ENCODE measurements at regions of chr11 and their contacts with region 1.

Region 1: DNA sequence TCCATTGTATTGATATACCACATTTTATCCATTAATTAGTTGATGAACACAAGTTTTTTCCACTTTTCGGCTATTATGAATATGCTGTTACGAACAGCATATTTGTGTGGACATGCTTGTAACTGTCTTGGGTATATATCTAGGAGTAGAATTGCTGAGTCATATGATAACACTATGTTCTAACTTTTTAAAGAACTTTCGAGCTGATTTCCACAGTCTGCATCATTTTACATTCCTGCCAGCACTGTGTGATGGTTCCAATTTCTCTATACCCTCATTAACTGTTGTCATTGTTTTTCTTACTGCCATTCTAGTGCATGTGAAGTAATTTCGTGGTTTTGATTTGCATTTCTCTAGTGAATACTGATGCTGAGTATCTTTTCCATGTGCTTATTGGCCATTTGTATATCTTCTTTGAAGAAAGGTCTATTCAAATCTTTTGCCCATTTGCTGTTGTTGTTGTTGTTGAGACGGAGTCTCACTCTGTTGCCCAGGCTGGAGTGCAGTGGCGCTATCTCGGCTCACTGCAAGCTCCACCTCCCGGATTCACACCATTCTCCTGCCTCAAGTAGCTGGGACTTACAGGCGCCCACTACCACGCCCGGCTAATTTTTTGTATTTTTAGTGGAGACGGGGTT is 7.4 kb upstream of the RCE1 start:
- DNase-seq: no peak
- ATAC-seq: no peak
- H3K4me3 ChIP-seq: no peak overlapping the region
- H3K27ac ChIP-seq: no peak overlapping the region
- H3K4me1 ChIP-seq: peaks cover 8% of the 10 kb centered on the region; the same call in 1 of the 2 replicates
- H3K27me3 ChIP-seq: no peaks in the 10 kb centered on the region; a peak in 1 of 5 replicates
- CTCF ChIP-seq: no peak
- EP300 ChIP-seq: no peak
- POLR2A ChIP-seq: no peak
- RAD21 ChIP-seq: no peak

Region 2: GRCh38 chr11:66694732-66695207 is 141.1 kb before region 1 on chr11:
- CTCF ChIA-PET with region 1: interaction called, 84 read pairs
- POLR2A ChIA-PET with region 1: no interaction called
- in situ Hi-C with region 1: loop called (anchors 5 kb)
- intact Hi-C with region 1: loop called (anchors 1 kb)
- DNase-seq: peak; percentile 96
- ATAC-seq: peak; percentile 97
- H3K4me3 ChIP-seq: no peak overlapping the region
- H3K27ac ChIP-seq: no peak overlapping the region
- H3K4me1 ChIP-seq: no peaks in the 10 kb centered on the region
- H3K27me3 ChIP-seq: no peaks in the 10 kb centered on the region
- CTCF ChIP-seq: peak; percentile 97
- EP300 ChIP-seq: no peak
- POLR2A ChIP-seq: no peak
- RAD21 ChIP-seq: peak; percentile 97

Region 3: DNA sequence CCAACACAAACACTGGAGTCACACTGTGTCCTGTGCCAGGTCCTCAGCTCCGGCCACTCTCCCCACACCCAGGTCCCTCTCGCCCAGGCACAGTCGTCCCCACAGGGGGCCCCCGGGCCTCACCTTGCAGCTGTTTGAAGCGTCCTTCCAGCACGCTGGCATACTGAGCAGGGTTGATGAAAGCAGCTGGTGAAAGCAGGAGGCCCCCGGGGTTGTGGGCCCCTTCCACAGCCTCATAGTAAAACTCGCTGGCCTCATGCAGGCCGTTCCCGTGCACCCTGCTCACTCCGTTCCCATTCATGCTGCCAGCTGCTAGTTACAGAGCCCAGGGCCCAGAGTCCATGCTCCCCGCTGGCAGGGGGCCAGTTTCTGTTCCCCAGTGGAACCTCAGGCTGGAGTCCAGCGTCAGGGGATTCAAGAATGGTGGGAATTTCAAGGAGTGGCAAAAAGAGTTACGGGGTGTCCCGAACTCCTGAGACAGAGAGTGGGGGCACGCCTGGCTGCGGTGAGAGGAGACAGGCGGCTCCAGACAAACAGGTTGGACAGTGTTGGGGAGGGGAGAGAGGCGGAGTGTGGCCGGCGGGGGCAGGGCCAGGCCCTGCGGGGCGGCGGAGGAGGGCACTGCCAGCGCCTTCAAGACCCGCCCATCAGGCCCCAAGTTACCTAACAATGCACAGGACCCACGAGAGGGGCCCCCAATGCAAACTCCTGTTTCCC is 117.4 kb before region 1 on chr11:
- CTCF ChIA-PET with region 1: interaction called, 5 read pairs
- POLR2A ChIA-PET with region 1: no interaction called
- in situ Hi-C with region 1: no loop called
- intact Hi-C with region 1: loop called (anchors 1 kb)
- DNase-seq: peak; percentile 39
- ATAC-seq: peak; percentile 87
- H3K4me3 ChIP-seq: peak overlapping the region; percentile 57 to 77 (median 65)
- H3K27ac ChIP-seq: no peak overlapping the region
- H3K4me1 ChIP-seq: peaks cover 55% of the 10 kb centered on the region
- H3K27me3 ChIP-seq: no peaks in the 10 kb centered on the region
- CTCF ChIP-seq: peak; percentile 78
- EP300 ChIP-seq: no peak
- POLR2A ChIP-seq: peak in 1 of 2 experiments; percentile 37; a peak in 1 of 4 replicates
- RAD21 ChIP-seq: 0 out of 2 replicates have a peak, but pooled peaks have one; percentile 29

Measured in HepG2 (cell line).